ENCODE measurements at regions of chr1 and their contacts with region 1.

Region 1: GRCh38 chr1:223081181-223081994 is 61.7 kb downstream of the TLR5 start:
- DNase-seq: peak; percentile 60 to 72
- ATAC-seq: peak; percentile 85 to 95
- H3K4me3 ChIP-seq: peak overlapping the region; percentile 36 to 77 (median 48)
- H3K27ac ChIP-seq: peak overlapping the region; percentile 29 to 61 (median 46)
- H3K4me1 ChIP-seq: no peaks in the 10 kb centered on the region
- H3K27me3 ChIP-seq: no peaks in the 10 kb centered on the region
- CTCF ChIP-seq: peak; percentile 92 to 98 (median 96)
- POLR2A ChIP-seq: no peak

Region 2: GRCh38 chr1:222736972-222737371 is 344.4 kb before region 1 on chr1 and contains the start of gene FAM177B:
- in situ Hi-C with region 1: no loop called
- intact Hi-C with region 1: loop called (anchors 1 kb)
- DNase-seq: no peak
- ATAC-seq: no peak
- H3K4me3 ChIP-seq: no peak within 1 kb of the TSS
- H3K27ac ChIP-seq: no peak within 1 kb of the TSS
- H3K4me1 ChIP-seq: no peaks in the 10 kb centered on the region
- H3K27me3 ChIP-seq: no peaks in the 10 kb centered on the region
- CTCF ChIP-seq: no peak
- POLR2A ChIP-seq: no peak
- total RNA-seq, gene FAM177B: 0.39 TPM in 1 of 4 donors, not detected in the others

Region 3: DNA sequence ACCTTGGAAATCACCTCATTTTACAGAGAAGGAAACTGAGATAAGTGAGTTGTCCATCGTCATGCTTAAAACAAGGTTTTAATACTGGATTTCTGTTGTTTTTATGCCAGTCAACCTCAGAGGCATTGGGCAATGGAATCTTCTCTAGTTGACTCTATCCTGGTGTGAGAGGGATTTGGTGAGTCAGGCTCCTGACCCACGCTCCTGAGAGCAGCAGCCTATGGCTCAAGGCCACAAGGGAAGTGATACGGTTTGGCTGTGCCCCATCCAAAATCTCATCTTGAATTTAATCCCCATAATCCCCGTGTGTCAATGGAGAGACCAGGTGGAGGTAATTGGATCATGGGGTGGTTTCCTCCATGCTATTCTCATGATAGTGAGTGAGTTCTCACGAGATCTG is 28.5 kb before region 1 on chr1:
- in situ Hi-C with region 1: no loop called
- intact Hi-C with region 1: no loop called
- DNase-seq: no peak
- ATAC-seq: no peak
- H3K4me3 ChIP-seq: no peak overlapping the region
- H3K27ac ChIP-seq: no peak overlapping the region
- H3K4me1 ChIP-seq: no peaks in the 10 kb centered on the region
- H3K27me3 ChIP-seq: no peaks in the 10 kb centered on the region
- CTCF ChIP-seq: no peak
- POLR2A ChIP-seq: no peak

Region 4: GRCh38 chr1:223180731-223181321 is 99.4 kb after region 1 on chr1:
- in situ Hi-C with region 1: no loop called
- intact Hi-C with region 1: no loop called
- DNase-seq: no peak
- ATAC-seq: peak; percentile 58 to 79
- H3K4me3 ChIP-seq: no peak overlapping the region
- H3K27ac ChIP-seq: no peak overlapping the region
- H3K4me1 ChIP-seq: no peaks in the 10 kb centered on the region
- H3K27me3 ChIP-seq: no peaks in the 10 kb centered on the region
- CTCF ChIP-seq: no peak
- POLR2A ChIP-seq: no peak

Measured in gastrocnemius medialis (tissue), 4 donors.